Ascending aorta (tissue), 2 donors: ENCODE measurements at regions of chr11 and their contacts with region 1.

Region 1: DNA sequence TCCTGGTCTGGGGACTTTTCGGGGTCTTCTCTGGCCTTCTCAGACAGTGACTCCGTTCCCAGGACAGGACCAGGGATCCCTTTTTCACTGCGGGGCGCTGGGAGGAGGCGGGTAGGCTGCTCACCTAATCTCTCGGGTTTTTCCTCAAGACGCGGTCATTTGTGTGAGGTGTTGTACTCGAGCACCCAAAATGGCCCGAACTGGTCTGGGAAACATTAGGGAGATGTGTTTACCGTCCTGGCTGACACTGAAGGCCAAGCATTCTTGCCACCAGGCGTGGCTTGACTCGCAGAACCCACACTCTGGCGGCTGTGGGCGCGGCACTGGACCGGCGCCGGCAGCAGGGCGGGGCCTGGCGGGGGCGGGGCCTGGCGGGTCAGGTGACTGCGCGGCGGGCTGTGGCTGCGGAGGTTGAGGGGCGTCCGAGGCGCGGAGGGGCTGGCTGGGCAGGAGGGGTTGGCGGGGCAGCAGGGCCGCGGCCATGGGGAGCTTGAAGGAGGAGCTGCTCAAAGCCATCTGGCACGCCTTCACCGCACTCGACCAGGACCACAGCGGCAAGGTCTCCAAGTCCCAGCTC is at the start of gene SWAP70:
- DNase-seq: peak; percentile 67 to 96
- H3K4me3 ChIP-seq: peak within 1 kb of the TSS; percentile 74 to 92
- H3K27ac ChIP-seq: peak within 1 kb of the TSS; percentile 95 to 97
- H3K4me1 ChIP-seq: peaks cover 0 to 2% of the 10 kb centered on the region in 2 donors
- H3K27me3 ChIP-seq: no peaks in the 10 kb centered on the region
- CTCF ChIP-seq: peak; percentile 43 to 79 (median 62)
- total RNA-seq, gene SWAP70: 40.1 TPM

Region 2: DNA sequence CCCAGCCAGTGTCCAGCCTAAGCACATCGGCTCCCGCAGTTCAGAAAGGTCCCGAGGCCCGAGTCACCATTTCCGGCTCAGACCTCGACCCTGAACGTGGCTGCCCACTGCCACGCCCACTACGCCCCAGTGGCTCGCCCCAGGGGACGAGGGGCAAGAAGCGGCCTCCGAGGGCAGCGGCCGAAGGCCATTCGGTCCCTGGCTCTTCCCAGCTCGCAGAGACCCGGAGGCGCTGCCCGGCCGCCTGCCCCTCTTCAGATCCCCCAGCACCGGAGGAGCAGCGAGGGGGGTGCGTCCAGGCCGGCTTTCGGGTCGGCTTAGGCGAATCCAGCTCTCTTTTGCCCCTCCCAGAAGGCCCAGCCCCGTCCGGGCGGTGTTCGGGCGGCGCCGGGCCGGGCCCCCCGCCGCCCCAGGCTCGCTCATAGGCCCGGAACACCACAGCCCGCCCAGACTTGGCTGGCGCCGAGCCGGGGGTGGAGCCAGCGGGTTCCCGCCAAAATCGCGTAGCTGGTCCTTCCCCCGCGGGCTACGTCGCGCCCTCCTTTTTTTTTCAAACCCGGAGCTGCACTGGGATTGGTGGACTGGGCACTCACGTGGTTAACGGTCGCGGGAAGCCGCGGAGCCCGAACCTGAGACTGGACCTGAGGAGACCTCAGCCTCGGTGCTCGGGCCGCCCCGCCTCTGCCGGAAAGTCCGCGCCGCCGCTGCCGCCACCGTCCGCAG is 90.6 kb before region 1 on chr11 and contains the start of gene WEE1:
- intact Hi-C with region 1: loop called (anchors 5 kb)
- DNase-seq: peak; percentile 95 to 99
- H3K4me3 ChIP-seq: peak within 1 kb of the TSS; percentile 89 to 98
- H3K27ac ChIP-seq: peak within 1 kb of the TSS; percentile 93 to 98
- H3K4me1 ChIP-seq: peaks cover 16 to 27% of the 10 kb centered on the region in 2 donors
- H3K27me3 ChIP-seq: no peaks in the 10 kb centered on the region
- CTCF ChIP-seq: no peak
- total RNA-seq, gene WEE1: 20.8 TPM

Region 3: GRCh38 chr11:9716275-9717039 is 52.7 kb after region 1 on chr11:
- intact Hi-C with region 1: loop called (anchors 2 kb)
- DNase-seq: peak in 1 of 2 donors; percentile 75
- H3K4me3 ChIP-seq: peak overlapping the region in 1 of 2 donors; percentile 26
- H3K27ac ChIP-seq: peak overlapping the region; percentile 56 to 76
- H3K4me1 ChIP-seq: peaks cover 3 to 62% of the 10 kb centered on the region in 2 donors
- H3K27me3 ChIP-seq: no peaks in the 10 kb centered on the region
- CTCF ChIP-seq: no peak